CD8-positive, alpha-beta T cell (primary cell): ENCODE measurements at regions of chr6 and their contacts with region 1.

Region 1: GRCh38 chr6:33271458-33272274 is at the starts of genes RPS18 and VPS52:
- DNase-seq: peak; percentile 82 to 99 (median 90)
- ATAC-seq: peak; percentile 85
- H3K4me3 ChIP-seq: peak within 1 kb of the TSS; percentile 74 to 82
- H3K4me3 Mint-ChIP-seq: peak within 1 kb of the TSS; percentile 100
- H3K27ac ChIP-seq: peak within 1 kb of the TSS; percentile 87 to 95
- H3K27ac Mint-ChIP-seq: peak within 1 kb of the TSS; percentile 100
- H3K4me1 ChIP-seq: peaks cover 44% of the 10 kb centered on the region
- H3K4me1 Mint-ChIP-seq: peaks cover 62% of the 10 kb centered on the region
- H3K27me3 ChIP-seq: no peaks in the 10 kb centered on the region
- H3K27me3 Mint-ChIP-seq: no peaks in the 10 kb centered on the region
- CTCF ChIP-seq: no peak
- total RNA-seq, gene RPS18: 4,154 to 4,290 TPM
- total RNA-seq, gene VPS52: 72.2 to 75.9 TPM

Region 2: DNA sequence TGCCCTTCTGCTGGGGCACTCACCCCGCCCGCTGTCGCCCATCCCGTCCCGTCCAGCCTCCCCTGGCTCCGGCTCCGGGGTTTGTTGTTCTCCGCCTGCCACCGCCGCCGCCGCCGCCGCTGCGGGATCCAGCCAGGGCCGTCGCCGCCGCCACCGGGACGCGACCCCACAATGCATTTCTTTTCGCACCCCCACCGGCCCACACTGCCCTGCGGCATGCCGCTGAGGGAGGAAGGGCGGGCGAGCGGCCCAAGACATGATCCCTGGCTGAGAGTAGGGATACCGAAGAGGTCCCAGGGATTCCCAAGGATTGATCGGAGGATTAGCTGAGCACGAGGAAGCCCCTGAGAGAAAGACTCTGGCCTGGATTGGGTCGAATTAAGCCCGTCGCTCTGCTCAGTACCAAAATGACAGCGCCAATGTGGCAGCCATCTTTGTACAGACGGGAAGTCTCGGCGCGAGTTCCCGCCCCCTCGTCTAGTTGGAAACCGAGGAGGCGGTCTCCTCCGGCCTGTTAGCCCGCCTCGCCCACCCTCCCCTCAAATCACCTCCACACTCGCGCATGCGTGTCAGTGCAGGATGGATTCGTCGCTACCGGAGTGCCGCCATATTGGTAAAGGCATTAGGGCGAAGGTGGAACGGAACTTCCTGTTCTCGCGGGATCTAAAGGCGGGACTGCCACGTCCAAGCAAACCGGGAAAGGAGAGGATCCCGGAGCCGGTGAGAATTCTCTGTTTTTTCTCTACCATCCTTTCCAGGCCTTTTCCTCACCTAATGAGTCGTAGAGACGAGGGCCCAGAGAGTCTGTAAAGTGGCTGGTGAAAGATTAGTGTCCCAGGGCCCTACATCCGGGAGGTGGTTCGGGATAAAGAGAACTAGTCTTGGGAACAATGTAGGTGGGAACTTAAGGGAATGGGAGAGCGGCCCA is 71.2 kb before region 1 on chr6 and contains the starts of genes RXRB and SLC39A7:
- CTCF ChIA-PET with region 1: interaction called, 3 read pairs
- POLR2A ChIA-PET with region 1: interaction called, 3 read pairs
- intact Hi-C with region 1: loop called (anchors 1 kb)
- DNase-seq: peak; percentile 97 to 100 (median 99)
- ATAC-seq: peak; percentile 75
- H3K4me3 ChIP-seq: peak within 1 kb of the TSS; percentile 77 to 85
- H3K4me3 Mint-ChIP-seq: peak within 1 kb of the TSS; percentile 98
- H3K27ac ChIP-seq: peak within 1 kb of the TSS; percentile 89 to 94
- H3K27ac Mint-ChIP-seq: peak within 1 kb of the TSS; percentile 99
- H3K4me1 ChIP-seq: peaks cover 57% of the 10 kb centered on the region
- H3K4me1 Mint-ChIP-seq: peaks cover 78% of the 10 kb centered on the region
- H3K27me3 ChIP-seq: no peaks in the 10 kb centered on the region
- H3K27me3 Mint-ChIP-seq: no peaks in the 10 kb centered on the region
- CTCF ChIP-seq: no peak
- total RNA-seq, gene RXRB: 39.2 to 40.0 TPM
- total RNA-seq, gene SLC39A7: 9.7 to 11.0 TPM

Region 3: DNA sequence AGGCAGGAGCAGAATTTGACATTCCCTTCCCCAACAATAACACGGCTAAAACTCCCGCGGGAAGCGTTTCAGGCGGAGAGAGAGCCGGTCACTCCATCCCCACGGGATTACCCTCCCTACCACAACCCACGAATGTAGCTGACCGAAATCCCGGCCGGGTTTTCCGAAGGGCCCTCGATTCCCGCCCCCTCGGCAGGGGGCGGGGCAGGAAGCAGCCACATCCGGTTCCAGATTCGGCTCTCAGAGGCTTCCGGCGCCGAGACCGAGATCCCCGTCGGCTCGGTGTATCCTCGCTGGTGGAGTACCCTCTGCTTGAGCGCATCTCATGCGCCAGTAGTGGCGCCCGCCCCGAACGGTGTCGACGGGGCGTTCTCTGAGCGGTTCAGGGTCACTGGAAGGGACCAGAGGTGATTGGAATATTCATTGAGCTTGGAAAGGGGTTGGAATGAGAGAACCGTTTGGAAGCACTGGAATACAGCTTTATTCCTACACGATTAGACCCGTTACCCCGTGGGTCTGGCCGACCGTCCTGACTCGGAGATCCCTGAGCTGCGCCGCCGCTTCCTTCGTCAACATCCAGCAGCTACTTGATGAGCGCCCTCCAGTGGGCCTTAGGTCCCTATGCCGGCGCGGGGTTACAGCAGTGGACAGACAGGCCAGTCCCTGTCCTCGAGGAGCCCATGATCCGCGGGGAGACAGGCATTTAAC is 27.7 kb after region 1 on chr6:
- CTCF ChIA-PET with region 1: interaction called, 8 read pairs
- POLR2A ChIA-PET with region 1: interaction called, 48 read pairs
- intact Hi-C with region 1: loop called (anchors 1 kb)
- DNase-seq: peak; percentile 82 to 97 (median 94)
- ATAC-seq: peak; percentile 83
- H3K4me3 ChIP-seq: peak overlapping the region; percentile 88 to 91
- H3K4me3 Mint-ChIP-seq: peak overlapping the region; percentile 99
- H3K27ac ChIP-seq: peak overlapping the region; percentile 83 to 96
- H3K27ac Mint-ChIP-seq: peak overlapping the region; percentile 99
- H3K4me1 ChIP-seq: peaks cover 14% of the 10 kb centered on the region
- H3K4me1 Mint-ChIP-seq: peaks cover 41% of the 10 kb centered on the region
- H3K27me3 ChIP-seq: no peaks in the 10 kb centered on the region
- H3K27me3 Mint-ChIP-seq: no peaks in the 10 kb centered on the region
- CTCF ChIP-seq: peak; percentile 70

Region 4: GRCh38 chr6:33344701-33345697 is 73.3 kb after region 1 on chr6:
- CTCF ChIA-PET with region 1: interaction called, 29 read pairs
- POLR2A ChIA-PET with region 1: interaction called, 29 read pairs
- intact Hi-C with region 1: loop called (anchors 1 kb)
- DNase-seq: peak; percentile 33 to 94 (median 70)
- ATAC-seq: peak; percentile 58
- H3K4me3 ChIP-seq: peak overlapping the region; percentile 40 to 53
- H3K4me3 Mint-ChIP-seq: peak overlapping the region; percentile 82
- H3K27ac ChIP-seq: peak overlapping the region; percentile 75 to 95
- H3K27ac Mint-ChIP-seq: peak overlapping the region; percentile 94
- H3K4me1 ChIP-seq: peaks cover 32% of the 10 kb centered on the region
- H3K4me1 Mint-ChIP-seq: peaks cover 42% of the 10 kb centered on the region
- H3K27me3 ChIP-seq: no peaks in the 10 kb centered on the region
- H3K27me3 Mint-ChIP-seq: no peaks in the 10 kb centered on the region
- CTCF ChIP-seq: peak; percentile 72

Region 5: DNA sequence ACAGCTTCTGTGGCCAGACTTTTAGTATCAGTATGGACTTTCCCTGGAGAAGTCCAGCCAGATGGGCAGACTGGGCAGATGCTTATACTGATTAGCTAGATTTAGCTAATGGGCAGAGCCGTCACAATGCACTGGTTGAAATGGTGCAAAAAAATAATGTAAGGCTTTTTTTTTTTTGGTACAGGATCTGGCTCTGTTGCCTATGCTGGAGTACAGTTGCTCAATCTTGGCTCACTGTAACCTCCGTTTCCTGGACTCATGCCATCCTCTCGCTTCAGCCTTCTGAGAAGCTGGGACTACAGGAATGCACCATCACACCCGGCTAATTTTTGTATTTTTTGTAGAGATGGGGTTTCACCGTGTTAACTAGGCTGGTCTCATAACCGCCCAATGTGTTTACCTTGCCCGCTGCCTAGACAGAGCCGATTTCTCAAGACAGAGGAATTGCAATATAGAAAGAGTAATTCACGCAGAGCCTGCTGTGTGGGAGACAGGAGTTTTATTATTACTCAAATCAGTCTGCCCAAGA is 103.5 kb after region 1 on chr6:
- CTCF ChIA-PET with region 1: no interaction called
- POLR2A ChIA-PET with region 1: no interaction called
- intact Hi-C with region 1: no loop called
- DNase-seq: peak in 1 of 9 experiments; percentile 18
- ATAC-seq: no peak
- H3K4me3 ChIP-seq: no peak overlapping the region
- H3K4me3 Mint-ChIP-seq: no peak overlapping the region
- H3K27ac ChIP-seq: peak overlapping the region in 1 of 2 experiments; percentile 73
- H3K27ac Mint-ChIP-seq: peak overlapping the region; percentile 75
- H3K4me1 ChIP-seq: peaks cover 6% of the 10 kb centered on the region
- H3K4me1 Mint-ChIP-seq: peaks cover 20% of the 10 kb centered on the region
- H3K27me3 ChIP-seq: no peaks in the 10 kb centered on the region
- H3K27me3 Mint-ChIP-seq: no peaks in the 10 kb centered on the region
- CTCF ChIP-seq: no peak

Region 6: DNA sequence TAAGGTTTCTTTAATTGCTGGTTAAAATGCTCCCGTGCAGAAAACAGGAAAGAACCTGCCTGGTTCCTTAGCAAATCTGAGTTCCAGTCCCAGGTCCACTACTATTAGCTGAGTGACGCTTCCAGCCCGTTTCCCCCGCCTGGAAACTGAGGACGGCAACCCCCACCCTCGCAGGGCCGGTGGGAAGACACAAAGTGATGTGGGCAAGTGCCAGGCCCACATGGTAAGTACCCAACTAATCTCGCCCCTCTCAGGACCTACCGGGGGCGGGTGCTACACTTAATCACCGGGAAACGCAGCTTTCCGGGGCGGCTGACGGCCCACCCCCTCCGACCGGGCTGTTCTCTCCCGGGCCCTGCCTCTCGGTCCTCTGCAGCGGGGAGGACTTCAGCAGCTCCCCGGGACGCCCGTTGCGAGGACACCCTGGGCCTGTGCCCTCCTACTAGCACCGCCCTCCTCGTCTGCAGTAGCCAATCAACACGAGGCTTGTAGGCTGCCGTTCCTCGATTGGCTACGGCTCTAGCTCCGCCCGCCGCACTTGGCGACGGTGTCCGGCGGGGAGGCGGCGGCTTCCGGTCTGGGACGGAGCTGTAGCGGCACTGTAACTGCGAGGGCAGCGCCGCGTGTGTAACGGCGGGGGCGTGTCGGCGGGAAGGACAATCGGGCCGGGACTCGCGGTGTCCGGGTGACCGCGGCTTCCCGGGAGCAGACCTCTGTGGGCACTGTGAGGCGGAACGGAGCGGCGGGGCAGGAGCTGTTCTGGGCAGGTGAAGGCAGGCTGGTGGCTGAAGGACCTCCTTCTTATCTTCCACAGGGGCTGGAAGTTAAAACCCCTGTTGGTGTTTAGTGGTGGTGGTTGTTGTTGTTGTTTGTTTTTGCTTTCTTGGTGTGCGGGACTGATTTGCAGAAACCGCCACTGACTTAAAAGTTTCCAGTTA is 182.6 kb after region 1 on chr6 and contains the start of gene ZBTB9:
- CTCF ChIA-PET with region 1: no interaction called
- POLR2A ChIA-PET with region 1: interaction called, 8 read pairs
- intact Hi-C with region 1: loop called in 1 of 2 experiments (anchors 1 kb)
- DNase-seq: peak; percentile 86 to 96 (median 93)
- ATAC-seq: peak; percentile 98
- H3K4me3 ChIP-seq: peak within 1 kb of the TSS; percentile 92 to 93
- H3K4me3 Mint-ChIP-seq: peak within 1 kb of the TSS; percentile 98
- H3K27ac ChIP-seq: peak within 1 kb of the TSS; percentile 75 to 81
- H3K27ac Mint-ChIP-seq: peak within 1 kb of the TSS; percentile 97
- H3K4me1 ChIP-seq: peaks cover 23% of the 10 kb centered on the region
- H3K4me1 Mint-ChIP-seq: peaks cover 43% of the 10 kb centered on the region
- H3K27me3 ChIP-seq: no peaks in the 10 kb centered on the region
- H3K27me3 Mint-ChIP-seq: no peaks in the 10 kb centered on the region
- CTCF ChIP-seq: no peak
- total RNA-seq, gene ZBTB9: 7.1 to 9.5 TPM

Region 7: DNA sequence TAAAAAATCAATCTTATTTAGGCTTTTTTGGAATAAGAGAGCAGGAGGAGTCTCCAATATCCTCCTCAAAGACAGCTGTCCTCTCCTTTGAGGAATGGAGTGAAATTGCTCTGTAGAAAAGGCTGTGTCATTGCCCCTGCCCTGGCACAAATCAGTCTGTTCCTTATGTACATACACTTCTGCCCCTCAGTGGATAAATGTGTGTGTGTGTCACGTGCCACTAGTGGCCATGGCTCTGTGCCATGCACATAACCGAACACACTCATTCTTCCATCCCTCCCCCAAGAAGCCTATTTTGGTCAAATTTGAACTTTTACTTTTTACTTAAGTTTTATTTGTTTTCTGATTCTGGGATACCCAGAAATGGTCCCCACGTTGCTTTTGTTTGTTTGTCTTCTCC is 1666.6 kb after region 1 on chr6:
- CTCF ChIA-PET with region 1: no interaction called
- POLR2A ChIA-PET with region 1: no interaction called
- intact Hi-C with region 1: no loop called
- DNase-seq: no peak
- ATAC-seq: no peak
- H3K4me3 ChIP-seq: no peak overlapping the region
- H3K4me3 Mint-ChIP-seq: no peak overlapping the region
- H3K27ac ChIP-seq: no peak overlapping the region
- H3K27ac Mint-ChIP-seq: no peak overlapping the region
- H3K4me1 ChIP-seq: no peaks in the 10 kb centered on the region
- H3K4me1 Mint-ChIP-seq: no peaks in the 10 kb centered on the region
- H3K27me3 ChIP-seq: no peaks in the 10 kb centered on the region
- H3K27me3 Mint-ChIP-seq: no peaks in the 10 kb centered on the region
- CTCF ChIP-seq: no peak